CD4-positive, alpha-beta memory T cell (primary cell): ENCODE measurements at regions of chr5 and their contacts with region 1.

Region 1: GRCh38 chr5:77030097-77031071 is at the start of gene AGGF1:
- DNase-seq: peak; percentile 88 to 94 (median 90)
- H3K4me3 ChIP-seq: peak within 1 kb of the TSS; percentile 43 to 93
- H3K4me3 Mint-ChIP-seq: peak within 1 kb of the TSS; percentile 81 to 97 (median 94)
- H3K27ac ChIP-seq: peak within 1 kb of the TSS; percentile 82
- H3K27ac Mint-ChIP-seq: peak within 1 kb of the TSS; percentile 78 to 97 (median 92)
- H3K4me1 ChIP-seq: peaks cover 34% of the 10 kb centered on the region
- H3K4me1 Mint-ChIP-seq: peaks cover 25 to 49% (median 35%) of the 10 kb centered on the region in 4 donors
- H3K27me3 ChIP-seq: no peaks in the 10 kb centered on the region
- H3K27me3 Mint-ChIP-seq: peaks cover 0 to 1% of the 10 kb centered on the region in 2 donors
- total RNA-seq, gene AGGF1: 29.4 to 29.6 TPM

Region 2: DNA sequence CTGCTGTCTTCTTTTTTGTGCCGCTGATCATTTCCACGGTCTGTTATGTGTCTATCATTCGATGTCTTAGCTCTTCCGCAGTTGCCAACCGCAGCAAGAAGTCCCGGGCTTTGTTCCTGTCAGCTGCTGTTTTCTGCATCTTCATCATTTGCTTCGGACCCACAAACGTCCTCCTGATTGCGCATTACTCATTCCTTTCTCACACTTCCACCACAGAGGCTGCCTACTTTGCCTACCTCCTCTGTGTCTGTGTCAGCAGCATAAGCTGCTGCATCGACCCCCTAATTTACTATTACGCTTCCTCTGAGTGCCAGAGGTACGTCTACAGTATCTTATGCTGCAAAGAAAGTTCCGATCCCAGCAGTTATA is 297.4 kb before region 1 on chr5:
- CTCF ChIA-PET with region 1: no interaction called
- POLR2A ChIA-PET with region 1: interaction called, 3 read pairs
- intact Hi-C with region 1: loop called (anchors 10 kb)
- DNase-seq: peak; percentile 65 to 88 (median 70)
- H3K4me3 ChIP-seq: peak overlapping the region in 1 of 2 donors; percentile 8
- H3K4me3 Mint-ChIP-seq: peak overlapping the region; percentile 44 to 80 (median 78)
- H3K27ac ChIP-seq: peak overlapping the region; percentile 65
- H3K27ac Mint-ChIP-seq: peak overlapping the region; percentile 77 to 95 (median 90)
- H3K4me1 ChIP-seq: peaks cover 48% of the 10 kb centered on the region
- H3K4me1 Mint-ChIP-seq: peaks cover 18 to 48% (median 32%) of the 10 kb centered on the region in 4 donors
- H3K27me3 ChIP-seq: no peaks in the 10 kb centered on the region
- H3K27me3 Mint-ChIP-seq: no peaks in the 10 kb centered on the region

Region 3: GRCh38 chr5:77086689-77087483 is 56.5 kb after region 1 on chr5 and contains the start of gene ZBED3:
- CTCF ChIA-PET with region 1: interaction called, 3 read pairs
- POLR2A ChIA-PET with region 1: interaction called, 13 read pairs
- intact Hi-C with region 1: no loop called
- DNase-seq: peak; percentile 48 to 74 (median 56)
- H3K4me3 ChIP-seq: peak within 1 kb of the TSS; percentile 25 to 54
- H3K4me3 Mint-ChIP-seq: peak within 1 kb of the TSS; percentile 88 to 96 (median 93)
- H3K27ac ChIP-seq: no peak within 1 kb of the TSS
- H3K27ac Mint-ChIP-seq: peak within 1 kb of the TSS in 6 of 7 donors; percentile 3 to 93 (median 87)
- H3K4me1 ChIP-seq: peaks cover 12% of the 10 kb centered on the region
- H3K4me1 Mint-ChIP-seq: peaks cover 10 to 14% (median 14%) of the 10 kb centered on the region in 4 donors
- H3K27me3 ChIP-seq: no peaks in the 10 kb centered on the region
- H3K27me3 Mint-ChIP-seq: peaks cover 2 to 4% of the 10 kb centered on the region in 2 donors
- total RNA-seq, gene ZBED3: 0.67 to 1.4 TPM

Region 4: GRCh38 chr5:77491783-77492652 is 461.6 kb after region 1 on chr5 and contains the start of gene WDR41:
- CTCF ChIA-PET with region 1: interaction called, 6 read pairs
- POLR2A ChIA-PET with region 1: interaction called, 12 read pairs
- intact Hi-C with region 1: loop called (anchors 1 kb)
- DNase-seq: peak; percentile 79 to 87 (median 84)
- H3K4me3 ChIP-seq: peak within 1 kb of the TSS; percentile 57 to 91
- H3K4me3 Mint-ChIP-seq: peak within 1 kb of the TSS; percentile 85 to 95 (median 91)
- H3K27ac ChIP-seq: peak within 1 kb of the TSS; percentile 64
- H3K27ac Mint-ChIP-seq: peak within 1 kb of the TSS; percentile 65 to 94 (median 91)
- H3K4me1 ChIP-seq: peaks cover 7% of the 10 kb centered on the region
- H3K4me1 Mint-ChIP-seq: peaks cover 9 to 14% (median 10%) of the 10 kb centered on the region in 4 donors
- H3K27me3 ChIP-seq: no peaks in the 10 kb centered on the region
- H3K27me3 Mint-ChIP-seq: peaks cover 10 to 12% of the 10 kb centered on the region in 2 donors
- total RNA-seq, gene WDR41: 11.0 to 14.0 TPM